Adrenal gland (tissue), 19 donors: ENCODE measurements at regions of chr6 and their contacts with region 1.

Region 1: DNA sequence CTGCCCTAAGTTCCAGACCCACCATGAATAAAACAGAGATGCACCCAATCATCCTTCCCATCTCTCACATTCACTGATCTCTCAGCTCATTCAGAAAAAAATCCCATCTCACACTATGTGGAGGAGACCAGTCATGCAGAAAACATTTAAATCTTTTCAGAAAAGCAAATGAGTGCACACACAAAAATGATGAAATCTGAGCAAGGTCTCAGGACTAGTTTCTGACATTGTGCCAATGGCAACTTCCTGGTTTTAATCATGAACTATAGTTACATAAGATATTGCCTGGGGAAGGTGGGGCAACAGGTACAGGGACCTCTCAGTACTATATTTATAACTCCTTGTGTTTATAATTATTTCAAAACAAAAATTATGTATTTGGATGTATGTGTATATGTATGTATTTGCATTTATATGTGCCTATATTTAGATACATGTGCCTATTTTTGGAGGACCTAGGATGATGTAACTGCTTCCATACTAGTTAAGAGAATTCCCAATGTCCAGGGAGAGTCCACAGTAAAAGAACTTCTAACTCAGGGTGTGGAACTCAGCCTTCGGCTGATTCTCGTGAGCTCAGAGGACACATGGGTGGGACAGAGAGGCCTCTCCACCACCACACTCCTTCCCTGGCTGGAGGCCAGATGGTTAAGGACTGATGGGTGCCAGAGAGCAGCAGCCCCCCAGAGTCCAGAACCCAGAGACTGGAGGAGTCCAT is 71.7 kb upstream of the MAP3K4 start:
- DNase-seq: peak in 4 of 7 donors; percentile 22 to 53 (median 42)
- H3K4me3 ChIP-seq: no peak overlapping the region
- H3K27ac ChIP-seq: no peak overlapping the region
- H3K4me1 ChIP-seq: no peaks in the 10 kb centered on the region
- H3K27me3 ChIP-seq: no peaks in the 10 kb centered on the region
- CTCF ChIP-seq: no peak
- POLR2A ChIP-seq: no peak

Region 2: GRCh38 chr6:160464744-160465143 is 455.1 kb before region 1 on chr6:
- intact Hi-C with region 1: no loop called
- DNase-seq: no peak
- H3K4me3 ChIP-seq: no peak overlapping the region
- H3K27ac ChIP-seq: no peak overlapping the region
- H3K4me1 ChIP-seq: no peaks in the 10 kb centered on the region
- H3K27me3 ChIP-seq: no peaks in the 10 kb centered on the region
- CTCF ChIP-seq: no peak
- POLR2A ChIP-seq: no peak

Region 3: GRCh38 chr6:160733050-160733646 is 186.7 kb before region 1 on chr6:
- intact Hi-C with region 1: loop called in 1 of 2 experiments (anchors 10 kb)
- DNase-seq: peak; percentile 33 to 73 (median 54)
- H3K4me3 ChIP-seq: no peak overlapping the region
- H3K27ac ChIP-seq: no peak overlapping the region
- H3K4me1 ChIP-seq: no peaks in the 10 kb centered on the region
- H3K27me3 ChIP-seq: peaks cover 3% of the 10 kb centered on the region
- CTCF ChIP-seq: peak; percentile 58 to 71 (median 68)
- POLR2A ChIP-seq: no peak

Region 4: DNA sequence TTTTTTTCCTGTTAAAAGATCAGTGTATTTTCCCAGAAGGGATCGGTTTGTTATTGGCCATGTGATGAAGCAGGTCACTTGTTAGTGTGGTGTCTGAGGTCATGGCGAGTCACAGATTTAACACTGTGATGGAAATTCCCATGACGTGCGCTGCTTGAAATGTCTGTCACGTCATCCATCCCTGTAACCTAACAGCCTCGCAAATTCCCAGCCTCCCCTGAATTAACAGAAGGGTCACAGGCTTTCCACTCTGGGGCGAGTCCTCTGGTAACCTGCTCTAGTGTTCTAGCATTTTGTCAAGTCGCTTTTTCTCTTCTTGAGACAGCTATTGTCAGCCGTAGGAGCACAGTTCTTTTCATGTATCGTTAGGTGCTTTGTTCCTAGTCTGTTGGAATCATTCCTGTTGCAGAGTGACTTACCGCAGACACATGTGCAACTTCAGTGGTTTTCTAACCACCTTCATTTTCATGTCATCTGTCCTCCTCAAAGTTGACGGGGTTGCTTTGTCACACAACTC is 208.9 kb after region 1 on chr6:
- intact Hi-C with region 1: no loop called
- DNase-seq: no peak
- H3K4me3 ChIP-seq: no peak overlapping the region
- H3K27ac ChIP-seq: no peak overlapping the region
- H3K4me1 ChIP-seq: no peaks in the 10 kb centered on the region
- H3K27me3 ChIP-seq: no peaks in the 10 kb centered on the region
- CTCF ChIP-seq: no peak
- POLR2A ChIP-seq: no peak

Region 5: GRCh38 chr6:161186173-161186769 is 266.4 kb after region 1 on chr6:
- intact Hi-C with region 1: no loop called
- DNase-seq: peak in 4 of 7 donors; percentile 37 to 46 (median 37)
- H3K4me3 ChIP-seq: no peak overlapping the region
- H3K27ac ChIP-seq: no peak overlapping the region
- H3K4me1 ChIP-seq: no peaks in the 10 kb centered on the region
- H3K27me3 ChIP-seq: no peaks in the 10 kb centered on the region
- CTCF ChIP-seq: no peak
- POLR2A ChIP-seq: no peak